ENCODE measurements at regions of chr10 and their contacts with region 1.

Region 1: GRCh38 chr10:86693721-86694369 is 25.5 kb downstream of the LDB3 start:
- DNase-seq: peak; percentile 94
- H3K4me3 ChIP-seq: no peak overlapping the region
- H3K27ac ChIP-seq: peak overlapping the region; percentile 52
- H3K4me1 ChIP-seq: peaks cover 23% of the 10 kb centered on the region
- H3K27me3 ChIP-seq: no peaks in the 10 kb centered on the region
- CTCF ChIP-seq: peak; percentile 82

Region 2: DNA sequence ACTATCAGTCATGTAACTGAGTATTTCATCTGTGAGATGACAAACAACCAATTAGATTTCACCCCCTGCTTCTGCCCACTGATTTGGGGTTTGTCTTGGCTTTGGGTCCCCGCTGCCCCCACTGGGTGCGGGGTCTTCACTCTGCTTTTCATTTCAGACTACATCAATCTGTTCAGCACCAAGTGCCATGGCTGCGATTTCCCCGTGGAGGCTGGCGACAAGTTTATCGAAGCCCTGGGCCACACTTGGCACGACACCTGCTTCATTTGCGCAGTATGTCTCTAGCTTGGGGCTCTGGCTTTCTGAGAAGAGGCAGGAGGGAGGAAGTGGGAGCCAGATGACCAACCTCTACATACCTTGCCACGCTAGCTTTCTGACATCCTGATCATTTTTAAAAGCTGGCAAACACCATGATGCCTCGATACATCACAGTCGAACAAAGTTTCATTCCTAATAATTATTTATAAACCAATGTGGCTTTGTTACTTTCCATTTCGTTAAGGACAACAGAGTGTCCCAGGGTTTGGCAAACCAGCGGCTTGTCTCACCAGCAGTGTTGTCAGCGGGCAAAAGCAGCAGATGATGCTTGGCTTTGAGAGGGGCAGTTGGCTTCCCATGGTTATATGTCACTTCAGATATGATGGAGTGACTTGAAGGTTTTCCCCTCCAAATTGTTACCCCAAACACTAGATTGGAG is 32.3 kb after region 1 on chr10:
- CTCF ChIA-PET with region 1: no interaction called
- POLR2A ChIA-PET with region 1: no interaction called
- intact Hi-C with region 1: loop called (anchors 2 kb)
- DNase-seq: no peak
- H3K4me3 ChIP-seq: no peak overlapping the region
- H3K27ac ChIP-seq: no peak overlapping the region
- H3K4me1 ChIP-seq: no peaks in the 10 kb centered on the region
- H3K27me3 ChIP-seq: no peaks in the 10 kb centered on the region
- CTCF ChIP-seq: no peak

Region 3: GRCh38 chr10:86899670-86900276 is 205.9 kb after region 1 on chr10:
- CTCF ChIA-PET with region 1: interaction called, 15 read pairs
- POLR2A ChIA-PET with region 1: no interaction called
- intact Hi-C with region 1: no loop called
- DNase-seq: peak; percentile 83
- H3K4me3 ChIP-seq: no peak overlapping the region
- H3K27ac ChIP-seq: no peak overlapping the region
- H3K4me1 ChIP-seq: peaks cover 26% of the 10 kb centered on the region
- H3K27me3 ChIP-seq: no peaks in the 10 kb centered on the region
- CTCF ChIP-seq: peak; percentile 82

Region 4: DNA sequence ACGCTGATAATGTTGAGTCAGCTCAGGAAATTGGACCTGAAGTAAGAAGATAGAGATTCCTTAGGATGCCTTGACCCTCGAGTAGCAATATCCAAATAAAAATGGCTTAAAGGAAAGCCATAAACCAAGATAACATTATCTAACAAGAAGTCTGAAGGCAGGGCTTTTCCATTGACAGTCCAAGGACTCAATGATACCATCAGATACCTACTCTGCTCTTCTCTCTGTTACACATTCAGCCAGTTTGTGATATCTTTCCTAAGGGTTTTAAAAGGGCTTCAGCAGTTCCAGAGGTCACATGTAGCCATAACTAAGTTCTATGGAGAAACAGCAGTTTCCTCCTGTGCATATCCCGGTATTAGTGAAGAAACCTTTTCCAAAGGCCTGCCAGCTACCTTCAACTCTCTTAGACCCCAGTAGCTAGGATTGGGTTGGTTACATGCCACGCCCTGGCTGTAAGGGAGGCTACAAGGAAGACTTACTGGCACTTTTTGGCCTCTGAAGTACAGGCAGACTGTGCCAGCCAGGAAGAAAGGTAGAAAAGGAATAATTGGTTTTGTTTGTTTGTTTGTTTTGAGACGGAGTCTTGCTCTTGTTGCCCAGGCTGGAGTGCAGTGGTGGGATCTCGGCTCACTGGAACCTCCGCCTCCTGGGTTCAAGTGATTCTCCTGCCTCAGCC is 411.7 kb after region 1 on chr10:
- CTCF ChIA-PET with region 1: no interaction called
- POLR2A ChIA-PET with region 1: no interaction called
- intact Hi-C with region 1: no loop called
- DNase-seq: no peak
- H3K4me3 ChIP-seq: no peak overlapping the region
- H3K27ac ChIP-seq: no peak overlapping the region
- H3K4me1 ChIP-seq: no peaks in the 10 kb centered on the region
- H3K27me3 ChIP-seq: no peaks in the 10 kb centered on the region
- CTCF ChIP-seq: no peak

Measured in A673 (cell line).